B cell (primary cell): ENCODE measurements at regions of chr2 and their contacts with region 1.

Region 1: GRCh38 chr2:9644603-9645002 is 13.8 kb upstream of the YWHAQ start:
- DNase-seq: no peak
- ATAC-seq: no peak
- H3K4me3 ChIP-seq: no peak overlapping the region
- H3K4me3 Mint-ChIP-seq: no peak overlapping the region
- H3K27ac ChIP-seq: no peak overlapping the region
- H3K27ac Mint-ChIP-seq: no peak overlapping the region
- H3K4me1 ChIP-seq: peaks cover 0 to 5% of the 10 kb centered on the region in 2 donors
- H3K4me1 Mint-ChIP-seq: peaks cover 18% of the 10 kb centered on the region
- H3K27me3 ChIP-seq: no peaks in the 10 kb centered on the region
- H3K27me3 Mint-ChIP-seq: peaks cover 13% of the 10 kb centered on the region
- CTCF ChIP-seq: no peak

Region 2: DNA sequence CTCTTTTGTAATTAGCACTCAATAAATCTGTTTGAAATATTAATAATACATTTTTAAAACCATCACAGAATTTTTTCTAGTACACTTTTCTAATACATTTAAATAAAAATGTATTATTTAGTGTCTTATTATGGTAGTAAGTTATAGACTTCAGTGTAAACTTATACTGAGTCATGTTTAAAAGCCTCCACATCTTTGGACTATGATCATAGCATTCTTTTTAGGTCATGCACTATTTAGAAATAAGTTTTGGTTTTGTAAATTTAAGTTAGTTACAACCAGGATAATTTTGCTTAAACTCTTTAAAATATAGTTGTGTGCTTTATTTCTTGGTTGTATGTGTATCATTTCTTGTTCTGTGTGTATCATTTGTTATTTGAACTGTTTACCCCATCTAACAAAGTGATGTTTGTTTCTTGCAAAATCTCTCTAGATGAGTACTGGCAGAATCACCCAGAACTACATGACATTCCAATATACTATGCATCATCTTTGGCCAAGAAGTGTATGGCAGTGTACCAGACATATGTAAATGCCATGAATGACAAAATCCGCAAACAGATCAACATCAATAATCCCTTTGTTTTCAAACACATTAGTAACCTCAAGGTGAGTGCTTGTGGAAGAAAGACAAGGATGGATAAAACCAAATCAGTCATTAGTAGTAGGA is 204.4 kb before region 1 on chr2:
- CTCF ChIA-PET with region 1: no interaction called
- POLR2A ChIA-PET with region 1: no interaction called
- intact Hi-C with region 1: no loop called
- DNase-seq: no peak
- ATAC-seq: no peak
- H3K4me3 ChIP-seq: no peak overlapping the region
- H3K4me3 Mint-ChIP-seq: no peak overlapping the region
- H3K27ac ChIP-seq: no peak overlapping the region
- H3K27ac Mint-ChIP-seq: no peak overlapping the region
- H3K4me1 ChIP-seq: no peaks in the 10 kb centered on the region
- H3K4me1 Mint-ChIP-seq: no peaks in the 10 kb centered on the region
- H3K27me3 ChIP-seq: no peaks in the 10 kb centered on the region
- H3K27me3 Mint-ChIP-seq: no peaks in the 10 kb centered on the region
- CTCF ChIP-seq: no peak

Region 3: GRCh38 chr2:9961013-9961412 is 316.4 kb after region 1 on chr2:
- CTCF ChIA-PET with region 1: no interaction called
- POLR2A ChIA-PET with region 1: no interaction called
- intact Hi-C with region 1: loop called (anchors 5 kb)
- DNase-seq: no peak
- ATAC-seq: no peak
- H3K4me3 ChIP-seq: no peak overlapping the region
- H3K4me3 Mint-ChIP-seq: no peak overlapping the region
- H3K27ac ChIP-seq: no peak overlapping the region
- H3K27ac Mint-ChIP-seq: no peak overlapping the region
- H3K4me1 ChIP-seq: no peaks in the 10 kb centered on the region
- H3K4me1 Mint-ChIP-seq: peaks cover 5% of the 10 kb centered on the region
- H3K27me3 ChIP-seq: peaks cover 0 to 4% (median 0%) of the 10 kb centered on the region in 4 experiments
- H3K27me3 Mint-ChIP-seq: peaks cover 16% of the 10 kb centered on the region
- CTCF ChIP-seq: no peak